H1 (cell line): ENCODE measurements at regions of chr18 and their contacts with region 1.

Region 1: GRCh38 chr18:54119524-54120019 is 104.9 kb downstream of the MBD2 start:
- DNase-seq: peak in 1 of 2 experiments; percentile 54
- H3K4me3 ChIP-seq: peak overlapping the region in 1 of 4 experiments; percentile 12; a peak in 1 of 8 replicates
- H3K27ac ChIP-seq: no peak overlapping the region
- H3K4me1 ChIP-seq: peaks cover 0 to 16% (median 7%) of the 10 kb centered on the region in 4 experiments; a peak in 4 of 7 replicates
- H3K27me3 ChIP-seq: no peaks in the 10 kb centered on the region
- CTCF ChIP-seq: peak in 2 of 3 experiments; percentile 54 to 78; a peak in 2 of 4 replicates
- EP300 ChIP-seq: no peak
- POLR2A ChIP-seq: no peak
- RAD21 ChIP-seq: peak; percentile 86 to 90

Region 2: DNA sequence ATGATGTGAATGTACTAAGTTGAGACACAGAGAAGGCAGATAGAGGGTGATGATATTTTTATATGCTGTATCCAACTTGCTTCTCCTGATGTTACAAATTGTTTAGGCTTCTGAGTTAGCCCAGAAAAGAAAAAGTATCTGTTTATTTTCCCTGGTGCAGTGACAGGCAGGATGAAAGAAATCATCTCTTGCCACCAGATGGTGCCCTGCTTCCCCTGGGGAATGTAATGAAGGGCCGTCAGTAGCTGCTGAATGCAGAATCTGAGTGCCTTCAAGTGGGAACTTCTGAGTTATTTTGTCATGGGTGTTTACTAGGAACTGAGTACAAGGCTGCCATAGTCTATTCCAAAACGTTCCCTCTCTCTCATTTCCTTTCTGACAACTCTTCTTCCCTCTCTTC is 420.7 kb before region 1 on chr18:
- CTCF ChIA-PET with region 1: interaction called, 18 read pairs
- POLR2A ChIA-PET with region 1: no interaction called
- DNase-seq: peak in 1 of 2 experiments; percentile 48
- H3K4me3 ChIP-seq: no peak overlapping the region
- H3K27ac ChIP-seq: no peak overlapping the region
- H3K4me1 ChIP-seq: no peaks in the 10 kb centered on the region; a peak in 1 of 7 replicates
- H3K27me3 ChIP-seq: no peaks in the 10 kb centered on the region
- CTCF ChIP-seq: peak; percentile 64 to 70 (median 67)
- EP300 ChIP-seq: no peak
- POLR2A ChIP-seq: no peak
- RAD21 ChIP-seq: peak; percentile 83 to 88

Region 3: GRCh38 chr18:53909668-53910067 is 209.9 kb before region 1 on chr18:
- CTCF ChIA-PET with region 1: interaction called, 12 read pairs
- POLR2A ChIA-PET with region 1: no interaction called
- DNase-seq: peak; percentile 7 to 49
- H3K4me3 ChIP-seq: no peak overlapping the region
- H3K27ac ChIP-seq: no peak overlapping the region
- H3K4me1 ChIP-seq: no peaks in the 10 kb centered on the region; a peak in 1 of 7 replicates
- H3K27me3 ChIP-seq: peaks cover 0 to 1% (median 0%) of the 10 kb centered on the region in 4 experiments; a peak in 1 of 7 replicates
- CTCF ChIP-seq: peak in 2 of 3 experiments; percentile 46 to 64; a peak in 3 of 4 replicates
- EP300 ChIP-seq: no peak
- POLR2A ChIP-seq: no peak
- RAD21 ChIP-seq: peak; percentile 55 to 67

Region 4: DNA sequence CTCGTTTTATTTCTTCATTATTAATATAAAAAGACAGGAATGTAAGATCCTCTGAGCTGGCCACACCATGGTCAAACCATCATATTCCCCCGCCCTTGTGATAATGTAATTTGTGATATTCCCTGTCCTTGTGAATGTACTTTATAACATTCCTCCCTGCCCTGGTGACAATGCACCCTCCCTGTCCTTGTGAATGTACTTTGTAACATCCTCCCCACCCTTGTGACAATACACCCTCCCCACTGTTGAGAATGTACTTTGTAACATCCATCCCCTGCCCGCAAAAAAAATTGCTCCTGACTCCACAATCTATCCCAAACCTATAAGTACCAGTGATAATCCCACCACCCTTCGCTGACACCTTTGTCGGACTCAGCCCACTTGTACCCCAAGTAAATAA is 106.1 kb before region 1 on chr18:
- CTCF ChIA-PET with region 1: no interaction called
- POLR2A ChIA-PET with region 1: no interaction called
- DNase-seq: no peak
- H3K4me3 ChIP-seq: no peak overlapping the region
- H3K27ac ChIP-seq: no peak overlapping the region
- H3K4me1 ChIP-seq: no peaks in the 10 kb centered on the region
- H3K27me3 ChIP-seq: no peaks in the 10 kb centered on the region
- CTCF ChIP-seq: no peak
- EP300 ChIP-seq: no peak
- POLR2A ChIP-seq: no peak
- RAD21 ChIP-seq: no peak

Region 5: DNA sequence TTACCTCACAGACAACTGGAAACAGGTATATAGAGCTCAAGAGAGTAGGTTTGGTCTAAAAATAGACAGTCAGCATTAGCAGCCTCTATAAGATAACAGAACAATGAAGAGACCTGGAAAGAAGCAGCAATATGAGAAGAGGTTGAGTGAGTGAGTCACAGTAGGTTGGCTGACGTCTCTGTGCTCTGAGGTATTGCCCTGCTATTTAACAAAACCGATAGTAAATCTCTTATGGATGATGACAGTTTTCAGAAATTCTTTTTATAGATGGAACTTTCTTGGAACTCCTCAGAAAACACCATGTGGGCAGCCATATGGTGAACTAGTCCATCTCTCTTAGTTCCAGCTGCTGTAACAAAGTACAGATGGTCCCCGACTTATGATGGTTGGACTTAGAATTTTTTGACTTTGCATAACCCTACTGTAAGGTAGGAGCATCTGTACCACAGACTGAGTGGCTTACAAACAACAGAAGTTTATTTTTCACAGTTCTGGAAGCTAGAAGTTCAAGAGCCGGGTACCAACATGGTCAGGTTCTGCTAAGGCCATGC is 18.6 kb before region 1 on chr18:
- CTCF ChIA-PET with region 1: interaction called, 15 read pairs
- POLR2A ChIA-PET with region 1: interaction called, 3 read pairs
- DNase-seq: no peak
- H3K4me3 ChIP-seq: no peak overlapping the region; a peak in 1 of 8 replicates
- H3K27ac ChIP-seq: no peak overlapping the region
- H3K4me1 ChIP-seq: no peaks in the 10 kb centered on the region
- H3K27me3 ChIP-seq: no peaks in the 10 kb centered on the region
- CTCF ChIP-seq: no peak
- EP300 ChIP-seq: no peak
- POLR2A ChIP-seq: no peak
- RAD21 ChIP-seq: no peak

Region 6: DNA sequence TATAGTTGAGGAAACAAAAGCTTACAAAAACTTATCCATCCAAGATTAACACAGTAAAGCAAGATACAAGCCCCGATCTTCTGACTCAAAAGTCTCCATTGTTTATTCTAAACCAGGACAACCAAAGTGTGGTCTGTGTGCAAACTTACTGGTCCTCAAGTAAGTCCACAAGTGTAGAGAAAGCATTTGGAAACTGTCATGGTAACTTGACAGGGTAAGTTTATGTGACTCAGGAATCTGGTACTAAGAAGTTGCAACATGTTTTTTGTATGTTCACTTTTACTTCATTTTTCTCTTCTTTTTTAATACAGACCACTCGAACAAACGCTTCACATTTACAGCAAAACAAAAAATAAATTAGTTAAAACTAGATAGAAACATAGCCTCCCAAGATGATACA is 95.5 kb after region 1 on chr18:
- CTCF ChIA-PET with region 1: no interaction called
- POLR2A ChIA-PET with region 1: no interaction called
- DNase-seq: no peak
- H3K4me3 ChIP-seq: no peak overlapping the region
- H3K27ac ChIP-seq: no peak overlapping the region
- H3K4me1 ChIP-seq: peaks cover 0 to 3% (median 0%) of the 10 kb centered on the region in 4 experiments; a peak in 2 of 7 replicates
- H3K27me3 ChIP-seq: no peaks in the 10 kb centered on the region
- CTCF ChIP-seq: no peak
- EP300 ChIP-seq: no peak
- POLR2A ChIP-seq: no peak
- RAD21 ChIP-seq: no peak

Region 7: DNA sequence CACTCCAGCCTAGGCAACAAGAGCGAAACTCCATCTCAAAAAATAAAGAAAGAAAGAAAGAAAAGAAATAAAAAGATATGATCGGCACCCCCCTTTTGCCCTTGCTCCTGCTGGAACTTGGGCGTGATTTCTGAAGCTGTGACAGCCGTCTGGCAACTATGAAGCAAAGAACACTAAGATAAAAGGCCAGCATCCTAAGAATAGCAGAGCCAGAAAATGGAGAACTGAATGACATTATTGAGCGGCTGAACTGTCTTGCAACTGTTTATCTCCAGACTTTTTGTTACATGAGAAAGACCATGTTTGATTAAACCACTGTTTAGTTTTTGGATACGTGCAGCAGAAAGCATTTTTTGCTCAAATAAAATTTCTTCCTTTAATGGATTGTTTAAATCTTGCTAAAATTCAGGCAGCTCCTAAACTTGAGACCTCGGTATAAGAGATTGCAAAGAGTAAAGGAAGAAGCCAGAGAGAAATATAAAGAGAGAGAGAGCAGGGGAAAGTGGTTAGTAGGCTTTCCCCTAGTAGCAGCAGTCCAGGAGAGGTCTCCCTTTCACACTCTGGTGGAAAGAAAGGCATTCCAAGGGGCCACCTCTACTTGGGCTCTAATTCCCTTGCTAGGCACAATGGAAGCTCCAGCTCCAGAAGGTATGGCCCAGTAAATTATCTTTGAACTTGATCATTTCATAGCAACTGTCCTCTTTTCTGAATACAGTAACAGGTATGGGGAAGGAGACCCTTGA is 113.1 kb after region 1 on chr18:
- CTCF ChIA-PET with region 1: no interaction called
- POLR2A ChIA-PET with region 1: no interaction called
- DNase-seq: no peak
- H3K4me3 ChIP-seq: no peak overlapping the region
- H3K27ac ChIP-seq: no peak overlapping the region
- H3K4me1 ChIP-seq: no peaks in the 10 kb centered on the region
- H3K27me3 ChIP-seq: no peaks in the 10 kb centered on the region
- CTCF ChIP-seq: peak in 2 of 3 experiments; percentile 10 to 37; a peak in 2 of 4 replicates
- EP300 ChIP-seq: no peak
- POLR2A ChIP-seq: no peak
- RAD21 ChIP-seq: peak; percentile 57 to 63